K562 (cell line): ENCODE measurements at regions of chr7 and their contacts with region 1.

Region 1: DNA sequence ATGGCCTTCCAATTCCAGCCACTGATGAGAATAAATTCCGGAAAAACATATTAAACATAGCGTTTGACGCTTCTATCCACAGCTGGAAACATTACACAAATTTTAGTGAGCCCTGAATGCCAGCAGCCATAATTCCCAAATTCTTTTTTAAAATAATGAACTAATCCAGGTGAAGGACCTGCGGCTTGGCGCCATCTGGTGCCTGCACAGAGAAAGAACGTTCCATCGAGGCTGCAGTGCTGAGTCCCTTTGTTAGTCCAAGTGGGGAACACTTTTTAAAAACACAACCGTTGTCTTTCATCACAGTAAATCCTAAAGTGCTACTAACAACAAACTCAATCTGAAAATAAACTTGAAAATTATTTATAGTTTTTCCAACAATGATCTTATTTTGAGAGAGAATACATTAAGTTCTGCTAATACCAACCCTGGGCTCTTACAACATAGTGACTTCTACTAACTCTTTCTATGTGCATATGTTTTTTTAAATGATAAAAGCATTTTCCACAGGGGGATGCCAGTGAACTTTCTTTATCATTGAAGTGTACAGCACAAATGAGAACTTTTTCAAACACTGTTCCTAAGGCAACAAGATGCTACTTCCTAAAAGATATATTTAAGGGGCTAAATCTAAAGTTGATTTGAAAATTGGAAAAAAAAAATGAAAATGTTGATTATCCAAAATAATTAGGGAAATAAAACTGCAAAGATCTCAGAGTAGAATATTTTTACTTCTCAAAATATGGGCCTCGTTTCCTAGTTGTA is 166.9 kb upstream of the RNF32 start:
- DNase-seq: peak; percentile 57 to 67 (median 62)
- ATAC-seq: peak; percentile 81
- H3K4me3 ChIP-seq: no peak overlapping the region
- H3K27ac ChIP-seq: no peak overlapping the region
- H3K4me1 ChIP-seq: peaks cover 0 to 10% of the 10 kb centered on the region in 2 experiments; a peak in 2 of 5 replicates
- H3K27me3 ChIP-seq: peaks cover 28 to 49% of the 10 kb centered on the region in 2 experiments
- CTCF ChIP-seq: peak; percentile 81 to 86 (median 86)
- EP300 ChIP-seq: no peak
- POLR2A ChIP-seq: no peak
- RAD21 ChIP-seq: peak; percentile 59 to 86

Region 2: GRCh38 chr7:155796381-155797261 is 677.0 kb before region 1 on chr7:
- CTCF ChIA-PET with region 1: interaction called, 4 read pairs
- POLR2A ChIA-PET with region 1: no interaction called
- in situ Hi-C with region 1: no loop called
- intact Hi-C with region 1: loop called (anchors 5 kb)
- DNase-seq: peak; percentile 80 to 91 (median 91)
- ATAC-seq: peak; percentile 97
- H3K4me3 ChIP-seq: no peak overlapping the region
- H3K27ac ChIP-seq: no peak overlapping the region
- H3K4me1 ChIP-seq: peaks cover 0 to 16% of the 10 kb centered on the region in 2 experiments; a peak in 2 of 5 replicates
- H3K27me3 ChIP-seq: peaks cover 38 to 59% of the 10 kb centered on the region in 2 experiments
- CTCF ChIP-seq: peak; percentile 81 to 93 (median 83)
- EP300 ChIP-seq: no peak
- POLR2A ChIP-seq: no peak
- RAD21 ChIP-seq: peak; percentile 71 to 88

Region 3: GRCh38 chr7:155815332-155816191 is 658.1 kb before region 1 on chr7:
- CTCF ChIA-PET with region 1: interaction called, 7 read pairs
- POLR2A ChIA-PET with region 1: interaction called, 3 read pairs
- in situ Hi-C with region 1: loop called (anchors 10 kb)
- intact Hi-C with region 1: loop called (anchors 5 kb)
- DNase-seq: peak; percentile 64 to 85 (median 81)
- ATAC-seq: peak; percentile 94
- H3K4me3 ChIP-seq: no peak overlapping the region
- H3K27ac ChIP-seq: no peak overlapping the region
- H3K4me1 ChIP-seq: peaks cover 0 to 13% of the 10 kb centered on the region in 2 experiments; a peak in 1 of 5 replicates
- H3K27me3 ChIP-seq: peaks cover 47 to 87% of the 10 kb centered on the region in 2 experiments
- CTCF ChIP-seq: peak; percentile 72 to 89 (median 81)
- EP300 ChIP-seq: no peak
- POLR2A ChIP-seq: no peak
- RAD21 ChIP-seq: peak; percentile 67 to 85

Region 4: DNA sequence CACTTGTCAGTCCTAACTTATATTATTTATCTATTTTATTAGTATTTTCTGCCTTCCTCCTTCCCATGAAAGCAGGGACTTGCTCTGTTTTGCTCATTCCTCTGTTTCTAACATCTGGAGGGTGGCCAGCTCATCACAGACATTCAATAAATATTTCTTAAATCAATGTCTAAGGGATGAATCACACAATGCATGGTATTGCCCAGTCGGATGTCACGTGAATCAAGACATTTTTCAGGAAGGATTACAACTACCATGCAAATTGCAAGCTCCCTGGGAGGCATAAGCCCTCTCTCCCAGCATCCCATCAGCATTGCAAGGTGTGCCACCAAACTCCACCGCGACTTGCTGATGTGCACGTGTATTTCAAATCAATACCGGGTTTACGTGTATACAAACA is 20.3 kb after region 1 on chr7:
- CTCF ChIA-PET with region 1: no interaction called
- POLR2A ChIA-PET with region 1: no interaction called
- in situ Hi-C with region 1: no loop called
- intact Hi-C with region 1: no loop called
- DNase-seq: no peak
- ATAC-seq: no peak
- H3K4me3 ChIP-seq: no peak overlapping the region
- H3K27ac ChIP-seq: no peak overlapping the region
- H3K4me1 ChIP-seq: peaks cover 0 to 2% of the 10 kb centered on the region in 2 experiments; a peak in 1 of 5 replicates
- H3K27me3 ChIP-seq: peaks cover 46 to 67% of the 10 kb centered on the region in 2 experiments
- CTCF ChIP-seq: no peak
- EP300 ChIP-seq: no peak
- POLR2A ChIP-seq: no peak
- RAD21 ChIP-seq: no peak